ENCODE measurements at regions of chr19 and their contacts with region 1.

Region 1: DNA sequence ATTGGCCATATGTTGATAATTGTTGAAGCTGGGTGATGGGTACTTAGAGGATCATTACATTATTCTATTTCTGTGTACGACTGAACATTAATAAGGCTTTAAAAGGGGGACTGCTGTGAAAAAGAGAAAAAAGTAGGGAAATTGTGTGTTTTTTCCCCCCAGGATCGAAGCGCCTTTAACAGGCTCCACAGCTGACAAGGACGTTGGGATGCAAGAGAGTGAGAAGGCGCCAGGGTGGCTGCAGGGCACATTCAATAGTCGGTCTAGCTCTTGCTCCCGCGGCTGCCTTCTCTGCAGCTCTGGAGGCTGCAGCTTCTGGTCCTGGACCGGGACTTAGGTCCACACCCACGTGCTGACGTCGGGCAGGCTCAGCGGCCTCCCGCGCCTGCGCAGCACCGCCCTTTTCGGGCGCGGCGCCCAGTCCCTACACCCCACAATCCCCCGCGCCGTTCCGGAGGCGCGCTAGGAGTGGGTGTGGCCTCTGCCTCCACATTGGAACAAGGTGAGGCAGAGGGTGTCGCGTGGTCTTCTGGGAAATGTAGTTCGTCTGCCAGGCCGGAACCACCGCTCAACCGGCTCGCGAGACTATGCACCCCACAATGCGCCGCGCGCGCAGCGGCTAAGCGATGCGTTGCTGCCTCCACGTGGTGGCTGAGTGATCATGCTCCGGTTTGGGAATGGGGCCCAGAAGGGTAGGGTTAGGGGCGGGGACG is 4.9 kb upstream of the LRFN3 start:
- DNase-seq: peak; percentile 99
- ATAC-seq: peak; percentile 99

Region 2: DNA sequence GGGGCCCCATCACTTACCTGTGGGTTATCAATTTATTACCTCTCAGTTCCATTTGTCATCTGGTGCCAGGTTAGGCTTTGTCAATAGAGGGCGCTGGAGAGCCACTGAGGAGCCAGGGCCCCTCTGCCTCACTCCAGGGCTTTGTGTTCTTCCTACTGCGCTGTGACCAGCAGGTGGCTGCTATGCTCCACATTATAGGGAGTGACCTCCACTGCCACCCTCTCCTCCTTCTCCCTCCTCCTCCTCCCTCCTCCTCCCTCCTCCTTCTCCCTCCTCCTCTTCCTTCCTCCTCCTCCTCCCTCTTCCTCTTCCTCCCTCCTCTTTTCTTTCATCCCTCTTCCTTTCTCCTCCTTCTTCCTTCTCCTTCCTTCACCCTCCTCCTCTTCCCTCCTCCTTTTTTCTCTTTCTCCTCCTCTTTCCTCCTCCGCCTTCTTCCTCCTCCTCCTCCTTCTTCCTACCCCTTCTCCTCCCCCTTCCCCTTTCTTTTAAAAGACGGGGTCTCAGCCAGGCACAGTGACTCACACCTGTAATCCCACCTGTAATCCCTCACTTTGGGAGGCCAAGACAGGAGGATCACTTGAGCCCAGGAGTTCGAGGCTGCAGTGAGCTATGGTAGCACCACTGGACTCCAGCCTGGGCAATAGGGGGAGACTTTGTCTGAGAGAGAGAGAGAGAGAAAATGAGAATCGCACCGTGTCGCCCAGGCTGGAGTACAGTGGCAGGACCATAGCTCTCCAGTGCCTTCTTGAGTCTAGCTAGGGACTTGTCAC is 237.3 kb before region 1 on chr19:
- intact Hi-C with region 1: loop called in 1 of 2 experiments (anchors 2 kb)
- DNase-seq: peak; percentile 88
- ATAC-seq: peak; percentile 98 to 100

Region 3: GRCh38 chr19:35716801-35717666 is 214.3 kb before region 1 on chr19:
- intact Hi-C with region 1: loop called in 1 of 2 experiments (anchors 10 kb)
- DNase-seq: peak; percentile 97
- ATAC-seq: peak; percentile 94 to 96

Region 4: DNA sequence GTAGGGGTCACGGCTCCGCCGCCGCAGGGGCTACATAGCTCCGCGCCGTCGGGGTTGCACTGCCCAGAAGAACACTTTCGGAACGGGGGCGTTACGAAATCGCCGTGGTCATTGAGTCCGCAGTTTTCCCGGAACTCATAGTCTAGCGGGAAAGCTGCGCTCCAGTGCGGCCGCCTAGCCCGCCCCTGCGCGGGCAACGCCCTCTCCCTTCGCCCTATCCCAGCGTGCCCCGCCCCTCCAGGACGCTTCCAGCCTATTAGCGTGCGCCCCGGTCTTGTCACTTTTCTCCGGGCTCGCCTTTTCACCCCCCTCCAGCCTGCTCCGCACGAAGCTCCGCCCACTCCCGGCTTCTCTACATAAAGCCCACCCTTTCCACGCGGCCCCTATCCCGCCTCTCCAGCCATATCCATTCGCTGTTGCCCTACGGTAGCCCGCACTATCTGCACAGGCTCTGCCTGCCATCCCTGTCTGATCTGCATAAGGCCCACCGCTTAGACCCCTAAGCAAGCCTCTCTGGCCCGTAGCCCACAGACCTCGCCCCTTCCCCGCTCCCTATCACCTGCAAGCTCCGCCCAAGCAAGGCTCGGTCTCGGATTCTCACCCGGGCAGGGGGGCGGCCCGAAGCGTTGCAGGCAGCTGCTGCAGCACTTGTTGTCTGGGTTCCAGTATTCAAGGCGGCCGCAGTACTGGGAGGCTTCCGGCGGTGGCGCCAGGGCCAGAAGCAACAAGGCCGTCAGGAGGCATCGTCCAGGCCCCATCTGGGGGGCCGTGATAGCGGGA is 190.7 kb before region 1 on chr19:
- intact Hi-C with region 1: loop called in 1 of 2 experiments (anchors 10 kb)
- DNase-seq: peak; percentile 99
- ATAC-seq: peak; percentile 88 to 90

Region 5: GRCh38 chr19:35775298-35776110 is 155.8 kb before region 1 on chr19 and contains the start of gene ARHGAP33:
- intact Hi-C with region 1: loop called in 1 of 2 experiments (anchors 10 kb)
- DNase-seq: peak; percentile 100
- ATAC-seq: peak; percentile 99 to 100
- total RNA-seq, gene ARHGAP33: 2.4 to 2.7 TPM

Region 6: DNA sequence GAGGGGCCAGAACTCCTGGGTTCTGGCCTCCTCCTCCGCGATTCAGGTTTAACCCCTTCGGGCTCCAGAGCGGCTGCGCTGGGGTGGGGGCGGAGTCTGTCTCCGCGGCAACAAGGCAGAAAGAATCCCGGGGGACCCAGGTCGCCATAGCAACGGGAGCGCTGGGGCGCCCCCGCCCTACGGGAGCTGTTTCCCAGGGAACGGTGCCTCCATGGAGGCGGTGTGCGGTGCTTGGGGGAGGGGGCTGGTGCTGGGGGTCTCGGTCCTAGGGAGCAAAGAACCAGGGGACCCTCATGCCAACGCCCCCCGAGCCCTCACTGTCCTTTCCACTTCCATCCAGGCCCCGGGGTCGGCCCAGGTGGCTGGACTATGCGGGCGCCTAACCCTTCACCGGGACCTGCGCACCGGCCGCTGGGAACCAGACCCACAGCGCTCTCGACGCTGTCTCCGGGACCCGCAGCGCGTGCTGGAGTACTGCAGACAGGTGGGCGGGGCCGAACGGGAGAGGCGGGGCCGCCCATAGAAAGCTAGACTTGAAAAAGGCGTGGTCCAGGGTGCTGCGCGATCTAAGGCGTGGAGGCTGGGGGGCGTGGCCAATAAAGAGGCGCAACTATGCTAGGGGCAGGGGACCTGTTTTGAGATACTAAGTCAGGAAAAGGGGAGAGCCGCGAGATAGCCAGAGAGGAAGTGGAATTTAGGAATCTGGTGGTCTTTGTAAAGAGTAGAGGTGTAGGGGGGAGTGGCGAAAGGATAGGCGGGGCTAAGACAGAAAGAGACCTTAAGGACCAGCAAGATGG is 61.8 kb before region 1 on chr19:
- intact Hi-C with region 1: no loop called
- DNase-seq: peak; percentile 83
- ATAC-seq: peak; percentile 72 to 87

Region 7: DNA sequence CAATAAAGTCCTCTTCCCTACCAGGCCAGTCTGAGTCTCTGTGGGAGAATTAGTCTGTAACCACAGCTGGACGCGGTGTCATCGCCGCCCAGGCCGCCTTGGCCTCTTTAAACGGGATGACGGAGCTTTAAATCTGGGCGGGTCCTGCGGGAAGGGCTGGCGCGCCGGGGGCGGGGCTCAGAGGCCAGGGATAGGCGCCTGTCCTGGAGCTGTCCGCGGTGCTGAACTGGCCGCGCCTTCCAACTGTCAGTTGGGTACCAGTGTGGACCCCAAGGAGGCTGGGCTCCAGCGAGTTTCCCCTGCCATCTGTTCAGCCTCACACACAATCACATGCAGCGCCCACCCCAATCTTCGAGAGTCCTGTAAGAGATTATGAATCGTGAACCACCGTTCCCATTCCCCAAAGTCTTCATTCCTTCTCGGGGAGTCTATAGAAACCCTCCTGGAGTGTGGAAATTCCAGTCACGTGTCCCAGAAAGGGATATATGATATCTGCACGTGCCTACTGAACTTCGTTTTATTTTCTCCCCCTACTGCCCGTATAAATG is 51.5 kb before region 1 on chr19:
- intact Hi-C with region 1: loop called (anchors 5 kb)
- DNase-seq: peak; percentile 95
- ATAC-seq: peak; percentile 96 to 98

Measured in left cardiac atrium (tissue), 4 donors.